Activated CD4-positive, alpha-beta T cell treated with anti-CD3 and anti-CD28 coated beads for 36 hours (primary cell): ENCODE measurements at regions of chr6 and their contacts with region 1.

Region 1: GRCh38 chr6:37169496-37170272 is at the start of gene PIM1:
- DNase-seq: peak; percentile 100
- ATAC-seq: peak; percentile 76
- H3K4me3 Mint-ChIP-seq: peak within 1 kb of the TSS; percentile 91
- H3K27ac Mint-ChIP-seq: peak within 1 kb of the TSS; percentile 96
- H3K4me1 Mint-ChIP-seq: peaks cover 39% of the 10 kb centered on the region
- H3K27me3 Mint-ChIP-seq: no peaks in the 10 kb centered on the region
- total RNA-seq, gene PIM1: 137 to 163 TPM

Region 2: GRCh38 chr6:36504982-36505381 is 664.7 kb before region 1 on chr6:
- CTCF ChIA-PET with region 1: no interaction called
- POLR2A ChIA-PET with region 1: no interaction called
- intact Hi-C with region 1: no loop called
- DNase-seq: no peak
- ATAC-seq: no peak
- H3K4me3 Mint-ChIP-seq: no peak overlapping the region
- H3K27ac Mint-ChIP-seq: no peak overlapping the region
- H3K4me1 Mint-ChIP-seq: peaks cover 28% of the 10 kb centered on the region
- H3K27me3 Mint-ChIP-seq: no peaks in the 10 kb centered on the region

Region 3: DNA sequence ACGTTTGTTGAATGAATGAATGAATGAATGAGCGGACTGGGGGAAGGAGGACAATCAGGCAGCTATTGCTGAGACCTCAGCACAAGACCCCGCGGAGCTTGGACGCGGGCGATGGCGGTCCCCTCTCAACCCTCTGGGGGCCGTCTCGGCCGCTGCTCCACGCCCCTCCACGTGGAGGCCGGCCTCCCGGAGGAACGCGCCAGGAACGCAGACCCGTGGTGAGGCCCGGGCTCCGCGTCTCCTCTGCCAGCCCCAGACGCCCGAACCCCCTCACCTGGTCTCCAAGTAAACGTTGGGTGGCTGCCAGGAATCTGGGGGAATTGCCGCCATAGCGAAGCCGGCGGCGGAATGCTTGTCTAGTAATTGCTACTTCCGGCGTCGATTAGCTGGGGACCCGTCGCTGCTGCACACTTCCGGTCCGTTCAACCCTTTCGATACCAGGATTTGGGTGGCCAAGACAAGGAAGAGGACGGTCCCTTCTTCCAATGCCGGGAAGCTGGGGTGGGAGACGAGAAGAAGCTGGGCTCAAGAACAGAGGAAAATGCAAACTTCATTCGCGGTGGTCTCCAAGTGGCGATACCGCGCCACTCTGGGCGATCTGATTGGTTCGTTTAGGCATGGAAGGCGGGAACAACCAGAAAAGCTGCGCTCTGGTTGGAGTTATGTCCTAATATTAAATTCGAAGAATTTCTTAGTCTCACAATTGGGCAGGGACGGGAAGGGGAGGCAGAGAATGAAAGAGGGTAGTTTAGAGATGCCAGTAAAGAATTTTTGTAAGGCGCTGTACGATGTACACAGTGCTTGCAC is 295.0 kb before region 1 on chr6 and contains the start of gene PPIL1:
- CTCF ChIA-PET with region 1: interaction called, 4 read pairs
- POLR2A ChIA-PET with region 1: interaction called, 3 read pairs
- intact Hi-C with region 1: loop called in 1 of 2 experiments (anchors 5 kb)
- DNase-seq: peak; percentile 90
- ATAC-seq: peak; percentile 80
- H3K4me3 Mint-ChIP-seq: peak within 1 kb of the TSS; percentile 98
- H3K27ac Mint-ChIP-seq: peak within 1 kb of the TSS; percentile 99
- H3K4me1 Mint-ChIP-seq: peaks cover 45% of the 10 kb centered on the region
- H3K27me3 Mint-ChIP-seq: peaks cover 7% of the 10 kb centered on the region
- total RNA-seq, gene PPIL1: 45.9 to 46.0 TPM

Region 4: DNA sequence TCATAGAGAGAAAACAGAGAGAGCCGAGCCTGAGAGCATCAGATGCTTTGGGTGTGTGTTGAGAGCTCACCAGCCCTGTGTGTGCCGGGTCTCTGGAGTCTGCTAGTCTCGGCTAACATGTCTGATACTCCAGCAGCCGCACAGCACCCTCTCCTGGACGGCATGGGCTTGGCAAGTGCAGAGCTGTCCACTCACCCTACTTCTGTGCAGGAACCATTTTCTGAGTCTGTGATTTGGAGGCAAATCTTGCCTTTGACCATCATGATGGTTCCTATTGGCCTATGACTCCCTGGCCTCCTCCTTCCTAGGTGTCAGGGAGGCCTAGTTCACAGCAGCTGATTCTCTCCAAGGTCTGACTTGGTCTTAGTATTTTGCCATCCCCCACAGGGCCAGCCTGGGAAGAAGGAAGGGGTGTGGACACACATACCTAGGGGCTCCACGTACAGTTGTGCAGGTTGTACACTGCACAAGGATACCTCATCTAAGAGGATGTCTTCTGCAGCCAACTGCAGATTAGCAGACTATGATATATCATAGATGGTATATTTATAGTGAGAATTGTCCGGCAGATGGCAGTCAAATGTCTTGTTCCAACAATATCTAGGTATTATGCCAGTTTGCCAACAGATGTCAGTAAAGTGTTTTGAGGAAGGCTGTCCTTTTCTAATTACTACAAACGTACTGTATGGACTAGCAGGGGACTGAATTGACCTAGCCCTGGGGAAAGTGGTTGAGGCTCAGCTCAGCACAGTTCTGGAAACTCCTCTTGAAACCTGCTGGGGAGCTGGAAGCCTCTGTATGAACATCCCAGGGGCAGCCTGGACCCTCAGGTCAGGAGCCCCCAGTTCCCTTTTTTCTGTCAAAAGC is 151.3 kb before region 1 on chr6:
- CTCF ChIA-PET with region 1: interaction called, 271 read pairs
- POLR2A ChIA-PET with region 1: interaction called, 6 read pairs
- intact Hi-C with region 1: loop called (anchors 1 kb)
- DNase-seq: peak; percentile 97
- ATAC-seq: peak; percentile 95
- H3K4me3 Mint-ChIP-seq: no peak overlapping the region
- H3K27ac Mint-ChIP-seq: peak overlapping the region; percentile 61
- H3K4me1 Mint-ChIP-seq: peaks cover 45% of the 10 kb centered on the region
- H3K27me3 Mint-ChIP-seq: no peaks in the 10 kb centered on the region

Region 5: DNA sequence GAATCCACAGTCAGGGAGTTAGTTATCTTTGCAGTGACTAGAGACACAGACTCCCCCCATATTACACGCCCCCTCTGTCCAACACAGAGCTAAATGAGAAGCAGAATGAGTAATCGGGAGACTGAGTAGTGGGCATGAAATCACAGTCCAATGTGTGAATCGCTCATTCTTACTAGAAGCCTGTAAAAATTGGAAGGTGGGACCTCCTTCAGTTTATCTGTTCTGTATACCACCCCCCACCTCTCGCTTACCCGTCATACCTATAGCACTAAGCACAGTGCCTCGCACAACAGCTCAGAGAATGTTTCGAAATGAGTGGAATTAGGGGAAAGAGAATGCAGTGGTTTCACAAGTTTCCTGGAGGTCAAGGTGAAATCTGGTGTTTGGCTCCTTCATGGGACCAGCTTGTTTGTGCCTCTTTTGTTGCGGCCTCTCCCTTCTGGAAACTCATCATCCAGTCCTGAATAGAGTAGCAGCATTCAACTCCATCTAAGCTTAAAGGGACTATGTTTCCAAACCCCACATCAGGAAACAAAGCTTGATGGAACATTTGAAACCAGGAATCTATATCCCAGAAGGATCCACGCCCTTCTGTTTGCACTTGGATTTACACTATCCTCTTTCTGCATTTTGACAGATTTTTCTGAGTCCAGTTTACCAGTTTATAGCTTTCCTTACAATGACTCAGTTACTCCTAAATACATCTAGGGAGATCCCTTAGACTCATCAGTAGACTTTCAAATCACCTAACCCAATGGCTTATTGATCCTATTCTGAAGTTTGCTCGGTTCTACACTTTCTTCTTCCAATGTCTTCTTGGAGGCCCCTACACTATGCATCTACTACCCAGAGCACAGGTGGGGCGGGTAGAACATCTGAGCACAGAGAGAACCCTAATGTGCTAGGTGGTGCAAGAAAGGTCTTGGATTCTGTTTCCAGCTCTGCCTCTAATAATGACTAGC is 58.9 kb before region 1 on chr6:
- CTCF ChIA-PET with region 1: interaction called, 4 read pairs
- POLR2A ChIA-PET with region 1: interaction called, 11 read pairs
- intact Hi-C with region 1: loop called (anchors 1 to 2 kb)
- DNase-seq: peak; percentile 68
- ATAC-seq: peak; percentile 92
- H3K4me3 Mint-ChIP-seq: no peak overlapping the region
- H3K27ac Mint-ChIP-seq: peak overlapping the region; percentile 76
- H3K4me1 Mint-ChIP-seq: peaks cover 22% of the 10 kb centered on the region
- H3K27me3 Mint-ChIP-seq: no peaks in the 10 kb centered on the region

Region 6: GRCh38 chr6:37190159-37190535 is 20.5 kb after region 1 on chr6:
- CTCF ChIA-PET with region 1: interaction called, 22 read pairs
- POLR2A ChIA-PET with region 1: interaction called, 17 read pairs
- intact Hi-C with region 1: loop called in 1 of 2 experiments (anchors 2 kb)
- DNase-seq: peak; percentile 62
- ATAC-seq: peak; percentile 75
- H3K4me3 Mint-ChIP-seq: no peak overlapping the region
- H3K27ac Mint-ChIP-seq: peak overlapping the region; percentile 3
- H3K4me1 Mint-ChIP-seq: peaks cover 71% of the 10 kb centered on the region
- H3K27me3 Mint-ChIP-seq: no peaks in the 10 kb centered on the region

Region 7: DNA sequence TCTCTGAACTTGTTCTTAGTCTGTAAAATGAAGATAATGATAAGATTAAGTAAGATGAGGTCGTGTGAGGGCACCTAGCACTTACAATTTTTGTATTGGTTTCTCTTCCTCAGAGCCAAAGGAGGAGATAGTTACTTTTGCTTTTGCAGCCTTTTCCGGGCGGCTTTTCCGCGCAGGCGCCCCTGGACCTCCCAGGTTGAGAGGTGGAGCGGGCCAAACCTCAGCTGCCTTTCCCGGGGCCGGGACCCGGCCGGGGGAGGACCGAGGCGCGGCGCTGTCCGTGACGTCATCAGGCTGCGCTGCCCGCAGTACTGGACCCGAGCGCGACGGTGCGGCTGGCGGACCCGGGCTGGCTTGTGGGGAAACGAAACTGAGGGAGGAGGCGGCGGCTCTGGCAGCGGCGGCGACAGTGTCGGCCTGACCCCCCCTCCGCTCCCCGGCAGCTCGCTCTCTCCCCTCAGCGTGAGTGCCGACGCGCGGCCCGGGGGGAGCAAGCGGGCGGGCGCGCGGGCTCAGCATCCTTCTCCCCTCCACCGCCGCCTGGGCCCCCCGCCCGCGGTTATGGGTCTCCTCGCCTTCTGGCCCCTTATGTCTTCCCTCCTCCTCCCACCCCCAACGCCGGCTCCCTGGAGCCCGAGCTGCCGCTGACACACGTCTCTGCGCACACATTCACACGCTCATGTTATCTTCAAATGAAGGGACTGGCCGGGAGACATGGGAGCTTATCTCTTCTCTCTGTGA is 263.4 kb after region 1 on chr6 and contains the start of gene CMTR1:
- CTCF ChIA-PET with region 1: no interaction called
- POLR2A ChIA-PET with region 1: no interaction called
- intact Hi-C with region 1: loop called in 1 of 2 experiments (anchors 2 kb)
- DNase-seq: peak; percentile 98
- ATAC-seq: peak; percentile 88
- H3K4me3 Mint-ChIP-seq: peak within 1 kb of the TSS; percentile 98
- H3K27ac Mint-ChIP-seq: peak within 1 kb of the TSS; percentile 99
- H3K4me1 Mint-ChIP-seq: peaks cover 36% of the 10 kb centered on the region
- H3K27me3 Mint-ChIP-seq: peaks cover 4% of the 10 kb centered on the region
- total RNA-seq, gene CMTR1: 65.3 to 74.6 TPM

Region 8: DNA sequence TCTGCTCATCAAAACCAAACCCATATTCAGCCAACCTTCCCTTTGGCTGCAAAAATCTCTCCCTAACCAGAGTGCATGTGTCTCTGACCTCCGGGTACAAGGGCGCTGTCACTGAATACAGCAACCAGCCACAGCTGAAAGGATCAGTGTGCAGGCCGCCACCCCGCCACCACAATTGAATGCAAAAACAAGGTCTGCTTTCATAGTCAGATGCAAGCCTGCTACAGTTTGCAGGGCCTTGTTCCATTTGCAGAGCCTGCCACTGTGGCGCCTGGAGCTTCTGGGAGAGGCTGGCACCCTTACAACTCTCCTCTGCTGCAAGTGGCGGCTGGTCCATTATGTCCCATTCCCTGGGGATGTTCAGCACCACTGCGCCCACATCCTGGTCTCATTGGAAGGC is 504.5 kb after region 1 on chr6:
- CTCF ChIA-PET with region 1: no interaction called
- POLR2A ChIA-PET with region 1: no interaction called
- intact Hi-C with region 1: no loop called
- DNase-seq: no peak
- ATAC-seq: no peak
- H3K4me3 Mint-ChIP-seq: no peak overlapping the region
- H3K27ac Mint-ChIP-seq: no peak overlapping the region
- H3K4me1 Mint-ChIP-seq: no peaks in the 10 kb centered on the region
- H3K27me3 Mint-ChIP-seq: no peaks in the 10 kb centered on the region